HCT116 (cell line): ENCODE measurements at regions of chrX and their contacts with region 1.

Region 1: DNA sequence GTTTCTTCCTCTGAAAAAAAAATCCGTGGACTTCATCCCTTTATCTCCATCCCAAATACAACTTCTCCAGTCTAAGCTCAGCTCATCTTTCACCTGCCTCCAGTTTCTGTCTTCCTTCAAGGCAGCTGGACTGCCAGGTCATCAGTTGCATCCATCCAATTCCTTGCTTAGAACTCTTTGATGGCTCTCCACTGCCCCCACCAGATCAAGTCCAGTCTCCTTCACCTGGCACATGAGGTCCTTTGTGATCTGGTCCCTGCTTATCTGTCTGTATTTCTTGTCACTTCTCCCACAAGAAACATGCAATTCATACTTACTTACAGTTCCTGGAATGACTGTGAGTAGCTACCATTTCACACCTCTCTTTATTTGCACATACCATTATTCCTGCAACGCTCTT is 33.8 kb downstream of the OTUD6A start:
- DNase-seq: peak; percentile 12
- ATAC-seq: peak; percentile 83
- H3K4me3 ChIP-seq: no peak overlapping the region
- H3K27ac ChIP-seq: no peak overlapping the region
- H3K4me1 ChIP-seq: no peaks in the 10 kb centered on the region
- H3K27me3 ChIP-seq: no peaks in the 10 kb centered on the region
- CTCF ChIP-seq: peak; percentile 28 to 40 (median 38); a peak in 5 of 6 replicates
- POLR2A ChIP-seq: no peak
- RAD21 ChIP-seq: peak; percentile 58

Region 2: DNA sequence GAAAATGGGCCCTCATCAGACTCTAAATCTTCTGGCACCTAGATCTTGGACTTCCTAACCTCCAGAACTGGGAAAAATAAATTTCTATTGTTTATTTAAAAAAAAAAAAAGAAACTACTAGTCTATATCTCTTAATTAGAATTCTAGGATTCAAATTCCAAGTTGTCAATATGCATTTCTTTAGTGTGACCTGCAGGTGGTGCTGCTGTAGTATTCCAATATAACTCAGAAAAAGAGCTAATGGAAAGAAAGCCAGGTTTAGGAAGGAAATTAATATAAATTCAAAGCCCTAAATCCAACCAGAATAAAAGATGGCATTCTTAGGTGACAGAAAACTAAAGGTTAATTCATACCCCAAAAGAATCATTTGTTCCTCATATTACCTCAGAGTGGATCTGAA is 671.9 kb before region 1 on chrX:
- CTCF ChIA-PET with region 1: interaction called, 17 read pairs
- POLR2A ChIA-PET with region 1: no interaction called
- RAD21 ChIA-PET with region 1: no interaction called
- intact Hi-C with region 1: no loop called
- DNase-seq: peak; percentile 2
- ATAC-seq: no peak
- H3K4me3 ChIP-seq: no peak overlapping the region
- H3K27ac ChIP-seq: no peak overlapping the region
- H3K4me1 ChIP-seq: no peaks in the 10 kb centered on the region
- H3K27me3 ChIP-seq: peaks cover 22% of the 10 kb centered on the region
- CTCF ChIP-seq: peak; percentile 15 to 34 (median 21); a peak in 3 of 6 replicates
- POLR2A ChIP-seq: no peak
- RAD21 ChIP-seq: peak; percentile 44

Region 3: DNA sequence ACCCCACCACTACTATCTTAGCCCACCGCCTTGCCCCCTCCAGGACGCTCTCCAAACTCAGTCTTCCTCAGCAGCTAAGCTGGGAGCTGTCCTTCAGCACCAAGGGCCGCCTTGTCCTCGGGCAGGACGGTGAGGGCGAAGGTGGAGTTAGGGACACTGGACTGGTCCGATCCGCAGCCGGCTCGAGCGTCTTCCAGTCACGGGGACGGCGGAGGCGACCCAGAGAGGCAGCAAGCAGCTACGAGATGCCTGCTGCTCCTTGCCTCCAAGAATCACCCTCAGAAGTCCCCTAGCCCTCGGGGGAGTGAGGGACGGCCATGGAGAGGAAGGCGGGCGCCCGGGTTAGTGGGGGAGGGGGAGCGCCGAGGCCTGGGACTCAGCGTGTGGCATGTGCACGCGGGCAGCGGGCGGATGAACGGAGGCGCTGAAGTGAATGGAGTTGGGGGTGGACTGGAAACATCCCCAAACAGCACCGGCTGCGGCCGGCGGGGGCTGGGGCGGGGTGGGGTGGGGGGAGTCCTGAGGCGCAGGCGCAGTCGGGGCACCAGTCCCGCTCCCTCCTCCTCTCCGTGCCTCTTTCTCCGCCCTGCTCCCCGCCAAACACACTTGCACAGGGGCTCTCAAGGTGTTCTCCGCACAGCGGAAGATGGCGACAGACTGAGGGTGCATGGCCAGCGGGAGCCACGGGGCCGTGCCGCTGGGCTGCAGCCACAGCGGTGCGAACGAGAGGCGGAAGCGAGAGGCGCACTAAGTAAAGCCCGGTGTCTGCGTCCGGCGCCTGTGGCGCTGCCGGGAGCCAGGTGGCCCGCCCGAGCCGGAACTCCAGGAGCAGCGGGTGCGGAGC is 592.0 kb before region 1 on chrX and contains the start of gene NALF2:
- CTCF ChIA-PET with region 1: interaction called, 10 read pairs
- POLR2A ChIA-PET with region 1: no interaction called
- RAD21 ChIA-PET with region 1: no interaction called
- intact Hi-C with region 1: no loop called
- DNase-seq: peak; percentile 37
- ATAC-seq: peak; percentile 80
- H3K4me3 ChIP-seq: peak within 1 kb of the TSS; percentile 53 to 63
- H3K27ac ChIP-seq: peak within 1 kb of the TSS; percentile 76
- H3K4me1 ChIP-seq: peaks cover 0 to 4% of the 10 kb centered on the region in 2 experiments; a peak in 1 of 4 replicates
- H3K27me3 ChIP-seq: no peaks in the 10 kb centered on the region
- CTCF ChIP-seq: no peak
- POLR2A ChIP-seq: peak; percentile 46
- RAD21 ChIP-seq: no peak
- total RNA-seq, gene NALF2: 8.7 TPM

Region 4: GRCh38 chrX:69615779-69616456 is 480.1 kb before region 1 on chrX and contains the start of gene EDA:
- CTCF ChIA-PET with region 1: no interaction called
- POLR2A ChIA-PET with region 1: no interaction called
- RAD21 ChIA-PET with region 1: no interaction called
- intact Hi-C with region 1: loop called (anchors 10 kb)
- DNase-seq: peak; percentile 61
- ATAC-seq: peak; percentile 96
- H3K4me3 ChIP-seq: peak within 1 kb of the TSS; percentile 54 to 61
- H3K27ac ChIP-seq: no peak within 1 kb of the TSS; the same call in 1 of the 2 replicates
- H3K4me1 ChIP-seq: peaks cover 0 to 3% of the 10 kb centered on the region in 2 experiments; a peak in 1 of 4 replicates
- H3K27me3 ChIP-seq: no peaks in the 10 kb centered on the region
- CTCF ChIP-seq: no peak
- POLR2A ChIP-seq: no peak
- RAD21 ChIP-seq: no peak
- total RNA-seq, gene EDA: 5.2 TPM

Region 5: GRCh38 chrX:70133303-70134115 is 37.5 kb after region 1 on chrX and contains the start of gene IGBP1:
- CTCF ChIA-PET with region 1: interaction called, 13 read pairs
- POLR2A ChIA-PET with region 1: interaction called, 3 read pairs
- RAD21 ChIA-PET with region 1: interaction called in 1 of 2 experiments, 4 read pairs
- intact Hi-C with region 1: no loop called
- DNase-seq: peak; percentile 77
- ATAC-seq: peak; percentile 87
- H3K4me3 ChIP-seq: peak within 1 kb of the TSS; percentile 85 to 93
- H3K27ac ChIP-seq: peak within 1 kb of the TSS; percentile 94
- H3K4me1 ChIP-seq: peaks cover 12 to 35% of the 10 kb centered on the region in 2 experiments; a peak in 3 of 4 replicates
- H3K27me3 ChIP-seq: no peaks in the 10 kb centered on the region
- CTCF ChIP-seq: peak; percentile 46 to 60 (median 48)
- POLR2A ChIP-seq: no peak
- RAD21 ChIP-seq: peak; percentile 53
- total RNA-seq, gene IGBP1: 50.7 TPM